T-cell (primary cell): ENCODE measurements at regions of chr6 and their contacts with region 1.

Region 1: DNA sequence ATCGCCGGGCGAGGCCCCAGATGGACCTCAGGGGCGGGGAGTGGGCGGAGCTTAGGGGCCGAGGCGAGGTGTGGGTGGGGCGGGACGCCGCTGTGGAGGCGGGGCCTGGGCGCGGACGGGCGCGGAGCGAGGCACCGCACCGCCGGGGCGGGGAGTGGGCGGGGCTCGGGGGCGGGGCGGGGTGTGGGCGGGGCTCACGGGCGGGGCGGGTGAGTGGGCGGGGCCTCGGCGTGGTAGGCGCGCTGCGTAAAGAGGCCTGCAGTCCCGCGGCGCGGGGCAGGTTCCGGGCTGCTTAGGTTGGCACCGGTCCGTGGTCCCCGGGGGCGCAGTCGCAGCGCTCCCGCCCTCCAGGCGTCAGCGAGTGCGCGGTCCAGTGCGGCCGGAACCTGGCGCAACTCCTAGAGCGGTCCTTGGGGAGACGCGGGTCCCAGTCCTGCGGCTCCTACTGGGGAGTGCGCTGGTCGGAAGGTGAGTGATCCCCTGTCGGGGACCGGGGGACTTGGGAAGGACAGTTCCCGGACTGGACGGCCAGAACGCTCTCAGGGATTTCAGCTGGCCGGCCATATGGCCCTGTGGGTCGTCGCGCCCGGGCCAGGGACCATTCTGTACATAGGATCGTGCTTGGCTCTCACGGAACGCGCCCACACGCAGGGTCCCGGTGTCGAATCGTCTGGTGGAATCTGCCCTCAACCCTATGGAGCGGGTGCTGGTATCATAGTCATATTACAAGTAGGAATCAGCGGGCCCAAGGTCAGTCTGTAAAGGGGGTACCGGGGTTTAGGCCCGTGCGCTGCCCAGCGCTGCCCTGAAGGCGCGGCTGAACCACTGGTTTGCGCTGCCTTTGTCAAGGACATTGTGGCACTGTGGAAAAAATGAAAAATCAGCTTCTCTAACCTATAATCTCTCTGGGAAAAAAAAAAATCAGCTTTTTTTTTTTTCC is at the start of gene NQO2:
- DNase-seq: peak; percentile 69 to 97 (median 88)
- ATAC-seq: peak; percentile 79 to 89 (median 85)
- H3K4me3 ChIP-seq: peak within 1 kb of the TSS; percentile 77 to 86
- H3K4me3 Mint-ChIP-seq: peak within 1 kb of the TSS; percentile 85 to 89 (median 88)
- H3K27ac ChIP-seq: peak within 1 kb of the TSS; percentile 78
- H3K27ac Mint-ChIP-seq: peak within 1 kb of the TSS; percentile 85 to 86
- H3K4me1 ChIP-seq: peaks cover 7 to 28% of the 10 kb centered on the region in 2 experiments
- H3K4me1 Mint-ChIP-seq: peaks cover 21 to 36% (median 30%) of the 10 kb centered on the region in 3 donors
- H3K27me3 ChIP-seq: no peaks in the 10 kb centered on the region
- H3K27me3 Mint-ChIP-seq: no peaks in the 10 kb centered on the region
- total RNA-seq, gene NQO2: 9.1 to 54.6 (median 33.0) TPM

Region 2: DNA sequence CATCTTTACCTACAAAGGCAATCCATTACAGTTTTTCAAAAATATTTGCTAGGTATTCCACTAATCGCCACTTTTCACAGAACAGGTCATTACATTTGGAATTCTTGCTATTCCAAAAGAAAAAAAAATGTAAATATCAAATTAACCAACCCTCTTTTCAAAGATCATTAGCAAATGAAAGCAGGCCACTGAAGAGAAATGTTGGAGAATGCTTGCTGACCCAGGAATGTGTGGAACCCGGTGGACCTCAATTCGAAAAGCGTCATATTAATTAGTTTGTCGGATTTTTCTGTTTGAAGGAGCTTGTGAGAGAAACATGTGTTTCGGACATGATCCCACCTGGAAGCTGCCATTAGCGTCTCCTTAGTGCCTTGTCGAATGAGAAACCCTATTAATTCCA is 68.8 kb before region 1 on chr6:
- CTCF ChIA-PET with region 1: no interaction called
- POLR2A ChIA-PET with region 1: no interaction called
- DNase-seq: no peak
- ATAC-seq: no peak
- H3K4me3 ChIP-seq: no peak overlapping the region
- H3K4me3 Mint-ChIP-seq: no peak overlapping the region
- H3K27ac ChIP-seq: no peak overlapping the region
- H3K27ac Mint-ChIP-seq: no peak overlapping the region
- H3K4me1 ChIP-seq: peaks cover 5 to 12% of the 10 kb centered on the region in 2 experiments
- H3K4me1 Mint-ChIP-seq: peaks cover 8 to 13% (median 12%) of the 10 kb centered on the region in 3 donors
- H3K27me3 ChIP-seq: no peaks in the 10 kb centered on the region
- H3K27me3 Mint-ChIP-seq: no peaks in the 10 kb centered on the region

Region 3: GRCh38 chr6:2970034-2970685 is 29.7 kb before region 1 on chr6:
- CTCF ChIA-PET with region 1: no interaction called
- POLR2A ChIA-PET with region 1: no interaction called
- DNase-seq: no peak
- ATAC-seq: no peak
- H3K4me3 ChIP-seq: peak overlapping the region in 1 of 2 donors; percentile 58
- H3K4me3 Mint-ChIP-seq: peak overlapping the region; percentile 83 to 87 (median 85)
- H3K27ac ChIP-seq: peak overlapping the region; percentile 24
- H3K27ac Mint-ChIP-seq: peak overlapping the region; percentile 63 to 86
- H3K4me1 ChIP-seq: peaks cover 0 to 23% of the 10 kb centered on the region in 2 experiments
- H3K4me1 Mint-ChIP-seq: peaks cover 38 to 51% (median 42%) of the 10 kb centered on the region in 3 donors
- H3K27me3 ChIP-seq: peaks cover 0 to 6% of the 10 kb centered on the region in 2 experiments
- H3K27me3 Mint-ChIP-seq: peaks cover 0 to 4% of the 10 kb centered on the region in 2 donors

Region 4: DNA sequence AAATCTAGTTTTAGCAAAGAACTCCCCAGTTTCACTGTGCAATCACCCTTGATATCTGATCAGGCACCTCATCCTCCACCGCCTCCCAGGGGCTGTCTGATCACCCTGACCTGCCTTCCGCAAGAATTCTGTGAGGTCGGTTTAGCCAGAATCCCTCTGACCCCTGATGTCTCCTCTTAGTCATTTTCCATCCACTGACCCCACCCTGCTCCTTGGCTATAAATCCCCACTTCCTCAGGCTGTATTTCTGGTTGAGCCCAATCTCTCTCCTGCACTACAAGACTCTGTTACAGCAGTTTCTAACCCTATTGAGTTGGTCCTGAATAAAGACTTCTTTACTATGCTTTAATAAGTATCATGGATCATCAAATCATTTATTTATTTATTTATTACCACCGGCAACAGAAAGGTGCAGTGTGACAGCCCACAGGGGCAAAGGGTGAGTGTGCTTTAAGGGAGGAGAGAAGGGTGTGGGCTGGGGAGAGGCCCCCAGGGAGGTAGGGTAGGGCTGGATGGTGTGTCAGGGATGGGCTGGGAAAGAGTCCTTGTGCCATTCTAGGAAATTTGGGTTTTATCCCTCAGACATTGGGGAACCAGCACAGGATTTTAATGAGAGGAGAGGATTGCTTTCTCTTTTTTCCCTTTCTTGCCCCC is 17.3 kb before region 1 on chr6:
- CTCF ChIA-PET with region 1: no interaction called
- POLR2A ChIA-PET with region 1: no interaction called
- DNase-seq: no peak
- ATAC-seq: no peak
- H3K4me3 ChIP-seq: no peak overlapping the region
- H3K4me3 Mint-ChIP-seq: no peak overlapping the region
- H3K27ac ChIP-seq: no peak overlapping the region
- H3K27ac Mint-ChIP-seq: no peak overlapping the region
- H3K4me1 ChIP-seq: peaks cover 3 to 6% of the 10 kb centered on the region in 2 experiments
- H3K4me1 Mint-ChIP-seq: peaks cover 4 to 14% (median 11%) of the 10 kb centered on the region in 3 donors
- H3K27me3 ChIP-seq: peaks cover 0 to 4% of the 10 kb centered on the region in 2 experiments
- H3K27me3 Mint-ChIP-seq: peaks cover 4 to 5% of the 10 kb centered on the region in 2 donors

Region 5: DNA sequence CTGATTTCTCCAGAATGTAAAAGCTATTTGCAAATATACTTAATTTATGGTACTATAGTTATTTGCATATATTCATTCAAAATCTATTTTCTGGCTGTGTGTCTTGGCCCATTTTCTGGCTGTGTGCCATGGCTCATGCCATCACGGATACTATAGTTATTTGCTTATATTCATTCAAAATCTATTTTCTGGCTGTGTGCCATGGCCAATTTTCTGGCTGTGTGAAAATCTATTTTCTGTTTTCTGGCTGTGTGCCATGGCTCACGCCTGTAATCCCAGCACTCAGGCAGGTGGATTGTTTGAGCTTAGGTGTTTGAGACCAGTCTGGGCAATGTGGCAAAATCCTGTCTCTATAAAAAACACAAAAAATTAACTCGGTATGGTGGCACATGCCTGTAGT is 39.5 kb after region 1 on chr6:
- CTCF ChIA-PET with region 1: interaction called in 1 of 2 experiments, 11 read pairs
- POLR2A ChIA-PET with region 1: no interaction called
- DNase-seq: no peak
- ATAC-seq: no peak
- H3K4me3 ChIP-seq: no peak overlapping the region
- H3K4me3 Mint-ChIP-seq: no peak overlapping the region
- H3K27ac ChIP-seq: no peak overlapping the region
- H3K27ac Mint-ChIP-seq: no peak overlapping the region
- H3K4me1 ChIP-seq: no peaks in the 10 kb centered on the region
- H3K4me1 Mint-ChIP-seq: no peaks in the 10 kb centered on the region
- H3K27me3 ChIP-seq: no peaks in the 10 kb centered on the region
- H3K27me3 Mint-ChIP-seq: no peaks in the 10 kb centered on the region